ENCODE measurements at regions of chr11 and their contacts with region 1.

Region 1: DNA sequence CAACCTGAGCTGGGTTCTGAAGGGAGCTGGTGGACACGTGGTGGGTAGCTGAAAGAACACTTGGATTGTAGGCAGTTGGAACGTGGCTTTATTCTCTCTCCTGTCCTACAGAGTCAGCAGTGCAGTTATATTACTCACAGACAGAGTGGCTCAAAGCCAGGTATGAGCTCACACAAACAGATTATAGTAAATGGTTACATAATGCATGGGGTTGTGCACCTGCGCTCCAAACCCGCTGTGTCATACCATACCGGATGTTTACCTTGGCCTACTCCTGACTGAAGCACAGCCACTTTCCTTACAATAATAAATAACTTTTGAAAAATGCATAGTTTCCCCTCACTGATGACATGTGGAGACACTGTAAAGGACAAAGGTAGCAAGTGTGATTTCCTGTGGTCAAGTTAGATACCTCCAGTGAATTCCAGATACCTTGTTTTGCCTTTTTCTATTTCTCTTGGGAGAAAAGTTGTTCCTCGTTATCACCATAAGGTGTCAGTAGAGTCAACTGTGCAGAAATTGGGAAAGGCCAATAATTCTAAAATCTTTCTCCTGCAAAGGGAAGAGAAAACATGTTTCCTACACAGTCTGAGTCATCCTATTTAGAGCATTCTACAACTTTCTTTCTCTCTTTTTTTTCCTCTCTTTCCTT is 13.5 kb downstream of the MS4A6A start:
- DNase-seq: peak; percentile 46
- ATAC-seq: no peak
- H3K4me3 Mint-ChIP-seq: no peak overlapping the region
- H3K27ac Mint-ChIP-seq: no peak overlapping the region
- H3K4me1 Mint-ChIP-seq: peaks cover 15% of the 10 kb centered on the region
- H3K27me3 Mint-ChIP-seq: peaks cover 30% of the 10 kb centered on the region

Region 2: DNA sequence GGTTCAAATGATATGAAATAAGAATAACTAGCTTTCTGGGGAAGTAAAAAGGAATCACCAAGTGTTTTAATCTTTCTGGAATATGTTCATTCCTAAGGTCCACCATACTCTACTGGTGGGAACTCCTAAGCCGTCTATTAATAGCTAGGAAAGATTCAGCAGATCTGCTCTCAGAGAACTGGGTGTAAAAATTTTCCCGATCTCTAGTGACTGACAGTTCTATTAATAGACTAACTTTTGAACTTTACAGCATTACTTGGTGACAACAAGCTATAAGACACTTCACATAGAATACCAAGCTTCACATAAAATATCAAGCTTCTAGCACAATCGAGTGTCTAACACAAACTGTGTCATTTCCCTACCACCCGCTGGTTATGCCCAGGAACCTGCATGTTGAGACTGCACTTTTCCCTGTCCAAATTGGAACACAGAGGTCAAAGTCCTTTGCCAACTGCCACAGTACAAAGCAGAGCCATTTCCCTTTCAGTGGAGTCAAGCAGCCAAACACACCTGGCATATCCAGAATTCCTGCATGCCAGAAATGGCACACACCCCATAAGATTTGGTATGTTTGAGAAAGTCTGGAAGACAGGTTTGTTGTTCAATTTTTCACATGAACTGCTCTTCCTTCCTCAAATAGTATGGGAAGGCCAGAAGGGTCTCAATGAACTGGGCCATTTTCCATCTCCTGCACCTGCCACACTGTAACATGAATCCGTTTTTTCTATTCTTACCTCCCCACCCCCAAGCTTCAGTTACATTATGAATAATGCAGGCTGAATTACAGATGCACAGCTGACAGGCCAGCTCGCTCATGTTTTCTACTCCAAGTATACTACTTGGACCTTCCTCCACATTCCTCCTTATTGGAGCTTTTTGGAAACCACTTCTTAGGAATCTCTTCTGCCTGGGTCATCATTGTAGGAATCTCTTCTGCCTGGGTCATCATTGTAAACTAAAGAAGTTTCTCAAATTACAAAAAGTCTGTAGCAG is 557.5 kb before region 1 on chr11:
- CTCF ChIA-PET with region 1: no interaction called
- POLR2A ChIA-PET with region 1: no interaction called
- intact Hi-C with region 1: no loop called
- DNase-seq: no peak
- ATAC-seq: no peak
- H3K4me3 Mint-ChIP-seq: no peak overlapping the region
- H3K27ac Mint-ChIP-seq: peak overlapping the region; percentile 44
- H3K4me1 Mint-ChIP-seq: peaks cover 49% of the 10 kb centered on the region
- H3K27me3 Mint-ChIP-seq: no peaks in the 10 kb centered on the region

Region 3: GRCh38 chr11:60145677-60146076 is 23.7 kb before region 1 on chr11:
- CTCF ChIA-PET with region 1: interaction called, 4 read pairs
- POLR2A ChIA-PET with region 1: no interaction called
- intact Hi-C with region 1: loop called (anchors 1 to 2 kb)
- DNase-seq: no peak
- ATAC-seq: peak; percentile 52
- H3K4me3 Mint-ChIP-seq: no peak overlapping the region
- H3K27ac Mint-ChIP-seq: no peak overlapping the region
- H3K4me1 Mint-ChIP-seq: peaks cover 23% of the 10 kb centered on the region
- H3K27me3 Mint-ChIP-seq: peaks cover 4% of the 10 kb centered on the region

Region 4: GRCh38 chr11:60155931-60156330 is 13.5 kb before region 1 on chr11:
- CTCF ChIA-PET with region 1: no interaction called
- POLR2A ChIA-PET with region 1: no interaction called
- intact Hi-C with region 1: no loop called
- DNase-seq: no peak
- ATAC-seq: no peak
- H3K4me3 Mint-ChIP-seq: no peak overlapping the region
- H3K27ac Mint-ChIP-seq: no peak overlapping the region
- H3K4me1 Mint-ChIP-seq: peaks cover 5% of the 10 kb centered on the region
- H3K27me3 Mint-ChIP-seq: peaks cover 5% of the 10 kb centered on the region

Region 5: GRCh38 chr11:60193687-60194433 is 24.5 kb after region 1 on chr11:
- CTCF ChIA-PET with region 1: interaction called, 5 read pairs
- POLR2A ChIA-PET with region 1: no interaction called
- intact Hi-C with region 1: loop called in 1 of 2 experiments (anchors 2 kb)
- DNase-seq: peak; percentile 83
- ATAC-seq: peak; percentile 99
- H3K4me3 Mint-ChIP-seq: no peak overlapping the region
- H3K27ac Mint-ChIP-seq: no peak overlapping the region
- H3K4me1 Mint-ChIP-seq: peaks cover 20% of the 10 kb centered on the region
- H3K27me3 Mint-ChIP-seq: peaks cover 19% of the 10 kb centered on the region

Region 6: DNA sequence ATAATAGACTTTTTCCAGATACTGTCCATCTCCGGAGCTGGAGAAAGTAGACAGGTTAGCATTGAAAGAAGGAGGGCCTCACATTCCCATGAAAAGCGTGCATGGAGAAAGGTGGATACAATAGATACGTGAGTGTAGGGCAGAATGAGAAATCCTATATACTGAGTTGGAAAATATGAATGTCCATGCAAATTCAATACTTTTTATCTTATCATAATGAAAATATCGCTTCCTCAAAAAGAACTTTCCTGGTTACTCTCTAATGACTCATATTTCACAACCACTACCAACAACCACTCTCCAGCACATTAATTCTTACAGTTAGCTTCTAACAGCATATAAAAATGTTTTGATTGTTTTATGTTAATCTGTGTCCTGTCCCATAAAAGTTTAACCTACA is 35.5 kb after region 1 on chr11:
- CTCF ChIA-PET with region 1: no interaction called
- POLR2A ChIA-PET with region 1: no interaction called
- intact Hi-C with region 1: loop called (anchors 5 kb)
- DNase-seq: no peak
- ATAC-seq: peak; percentile 48
- H3K4me3 Mint-ChIP-seq: no peak overlapping the region
- H3K27ac Mint-ChIP-seq: no peak overlapping the region
- H3K4me1 Mint-ChIP-seq: peaks cover 16% of the 10 kb centered on the region
- H3K27me3 Mint-ChIP-seq: peaks cover 12% of the 10 kb centered on the region

Region 7: GRCh38 chr11:60251485-60252212 is 82.3 kb after region 1 on chr11:
- CTCF ChIA-PET with region 1: interaction called, 6 read pairs
- POLR2A ChIA-PET with region 1: no interaction called
- intact Hi-C with region 1: loop called in 1 of 2 experiments (anchors 1 kb)
- DNase-seq: peak; percentile 52
- ATAC-seq: no peak
- H3K4me3 Mint-ChIP-seq: no peak overlapping the region
- H3K27ac Mint-ChIP-seq: no peak overlapping the region
- H3K4me1 Mint-ChIP-seq: no peaks in the 10 kb centered on the region
- H3K27me3 Mint-ChIP-seq: peaks cover 35% of the 10 kb centered on the region

Region 8: GRCh38 chr11:60305906-60306619 is 136.7 kb after region 1 on chr11:
- CTCF ChIA-PET with region 1: no interaction called
- POLR2A ChIA-PET with region 1: no interaction called
- intact Hi-C with region 1: loop called in 1 of 2 experiments (anchors 1 kb)
- DNase-seq: no peak
- ATAC-seq: no peak
- H3K4me3 Mint-ChIP-seq: no peak overlapping the region
- H3K27ac Mint-ChIP-seq: no peak overlapping the region
- H3K4me1 Mint-ChIP-seq: peaks cover 32% of the 10 kb centered on the region
- H3K27me3 Mint-ChIP-seq: peaks cover 23% of the 10 kb centered on the region

Region 9: GRCh38 chr11:60504219-60504905 is 335.0 kb after region 1 on chr11:
- CTCF ChIA-PET with region 1: no interaction called
- POLR2A ChIA-PET with region 1: no interaction called
- intact Hi-C with region 1: loop called in 1 of 2 experiments (anchors 10 kb)
- DNase-seq: no peak
- ATAC-seq: peak; percentile 66
- H3K4me3 Mint-ChIP-seq: no peak overlapping the region
- H3K27ac Mint-ChIP-seq: no peak overlapping the region
- H3K4me1 Mint-ChIP-seq: peaks cover 10% of the 10 kb centered on the region
- H3K27me3 Mint-ChIP-seq: peaks cover 39% of the 10 kb centered on the region